Sciatic nerve (tissue), 2 donors: ENCODE measurements at regions of chr4 and their contacts with region 1.

Region 1: DNA sequence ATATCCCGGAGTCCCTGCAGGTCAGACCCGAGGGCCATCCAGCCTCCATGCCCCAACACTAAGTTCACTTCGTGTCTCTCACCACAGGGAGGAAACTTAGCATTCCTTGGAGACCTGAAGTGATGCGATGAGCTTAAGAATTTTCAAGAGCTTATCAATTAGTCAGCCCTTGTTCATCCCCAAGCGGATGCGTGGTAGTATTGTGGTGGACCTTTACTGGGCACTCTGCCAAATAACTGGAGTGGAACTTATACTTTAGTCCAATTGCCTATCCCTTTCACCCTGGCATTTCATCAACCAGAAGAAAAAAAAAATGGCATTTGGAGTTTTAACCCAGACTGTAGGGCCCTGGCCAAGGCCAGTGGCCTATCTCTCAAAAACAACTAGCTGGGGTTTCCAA is 137.1 kb downstream of the RELL1 start:
- DNase-seq: no peak
- ATAC-seq: no peak

Region 2: DNA sequence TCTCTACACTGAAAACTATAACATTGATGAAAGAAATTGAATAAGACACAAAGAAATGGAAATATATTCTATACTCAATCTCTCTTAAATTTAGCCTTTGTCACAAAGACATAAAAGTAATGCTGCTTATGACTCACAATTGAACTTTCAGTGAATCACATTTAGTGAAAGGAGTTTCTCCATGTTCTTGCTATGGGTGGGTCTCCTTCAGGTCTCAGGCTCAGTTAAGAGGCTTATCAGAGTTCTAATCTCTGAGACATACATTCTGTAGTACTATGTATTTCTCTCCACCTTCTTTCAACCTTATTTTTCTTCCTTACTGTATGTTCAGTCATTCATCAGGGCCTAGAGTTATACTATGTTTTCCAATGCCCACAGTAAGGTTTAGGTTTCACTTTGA is 1046.7 kb before region 1 on chr4:
- intact Hi-C with region 1: no loop called
- DNase-seq: no peak
- ATAC-seq: no peak

Region 3: GRCh38 chr4:37188100-37188499 is 360.9 kb before region 1 on chr4:
- intact Hi-C with region 1: loop called (anchors 5 kb)
- DNase-seq: no peak
- ATAC-seq: no peak